Kidney (tissue), 22 donors: ENCODE measurements at regions of chr1 and their contacts with region 1.

Region 1: DNA sequence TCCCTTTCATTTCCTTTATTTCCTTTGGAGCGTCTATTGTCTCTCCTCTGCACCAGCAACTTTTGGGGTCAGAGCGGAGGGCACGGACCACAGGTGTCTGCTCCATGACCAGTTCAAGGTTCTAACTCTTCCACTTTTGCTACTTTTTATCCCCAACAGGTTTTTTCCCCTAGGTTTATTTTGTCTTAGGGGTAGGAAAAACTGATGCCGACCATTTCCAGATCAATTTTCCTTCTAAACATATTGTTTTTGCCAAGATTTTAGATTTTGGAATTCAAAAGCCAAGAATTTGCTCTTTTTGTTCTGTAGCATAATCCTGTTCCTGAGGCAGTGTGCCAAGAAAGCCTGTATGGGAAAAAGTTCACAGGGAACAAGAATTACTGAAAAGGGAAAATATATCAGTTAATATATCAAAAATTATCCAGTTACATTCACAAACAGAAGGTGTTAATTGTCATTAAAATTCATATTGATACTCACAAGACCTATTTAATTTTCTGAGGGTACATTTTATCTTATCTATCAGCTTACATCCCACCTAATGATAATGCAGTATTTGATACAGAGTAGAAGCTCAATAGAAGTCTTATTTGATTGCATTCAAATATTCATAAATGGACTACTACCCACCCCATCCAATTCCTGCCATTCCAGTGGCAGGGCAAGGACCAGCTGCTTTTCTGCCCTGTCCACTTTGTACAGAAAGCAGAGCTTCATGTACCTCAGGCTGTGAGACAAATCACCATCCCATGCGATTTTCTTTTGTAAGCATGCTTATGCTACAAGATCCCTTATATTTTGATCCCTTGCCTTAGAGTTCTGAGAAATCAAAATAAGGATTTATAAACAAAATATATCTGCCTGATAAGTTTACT is 31.2 kb downstream of the TSEN15 start:
- DNase-seq: no peak
- H3K4me3 ChIP-seq: no peak overlapping the region
- H3K27ac ChIP-seq: no peak overlapping the region
- H3K4me1 ChIP-seq: no peaks in the 10 kb centered on the region
- H3K27me3 ChIP-seq: no peaks in the 10 kb centered on the region
- CTCF ChIP-seq: no peak

Region 2: DNA sequence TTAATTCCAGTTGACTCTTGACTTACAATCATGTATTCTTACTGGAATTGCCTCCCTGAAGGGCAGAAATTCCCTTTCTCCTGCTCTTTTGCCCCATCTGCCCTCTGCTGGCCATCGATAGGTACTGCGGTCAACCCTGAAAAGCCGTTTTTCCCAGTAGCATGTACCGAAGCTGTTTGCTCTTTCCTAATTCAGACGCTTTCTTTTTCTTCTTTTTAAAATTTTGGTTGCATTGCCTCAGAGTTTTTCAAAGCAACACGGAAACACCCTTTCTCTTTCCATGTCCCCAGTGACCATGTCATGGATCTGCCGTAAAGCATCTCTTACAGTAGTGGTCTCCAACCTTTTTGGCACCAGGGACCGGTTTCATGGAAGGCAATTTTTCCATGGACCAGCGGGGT is 139.9 kb after region 1 on chr1:
- intact Hi-C with region 1: loop called (anchors 10 kb)
- DNase-seq: peak in 3 of 5 donors; percentile 34 to 48 (median 36)
- H3K4me3 ChIP-seq: peak overlapping the region in 2 of 3 donors; percentile 42 to 46
- H3K27ac ChIP-seq: no peak overlapping the region
- H3K4me1 ChIP-seq: no peaks in the 10 kb centered on the region
- H3K27me3 ChIP-seq: no peaks in the 10 kb centered on the region
- CTCF ChIP-seq: peak; percentile 97

Region 3: GRCh38 chr1:184352776-184353175 is 270.0 kb after region 1 on chr1:
- intact Hi-C with region 1: no loop called
- DNase-seq: no peak
- H3K4me3 ChIP-seq: no peak overlapping the region
- H3K27ac ChIP-seq: no peak overlapping the region
- H3K4me1 ChIP-seq: no peaks in the 10 kb centered on the region
- H3K27me3 ChIP-seq: no peaks in the 10 kb centered on the region
- CTCF ChIP-seq: no peak